Naive thymus-derived CD4-positive, alpha-beta T cell (primary cell): ENCODE measurements at regions of chr14 and their contacts with region 1.

Region 1: DNA sequence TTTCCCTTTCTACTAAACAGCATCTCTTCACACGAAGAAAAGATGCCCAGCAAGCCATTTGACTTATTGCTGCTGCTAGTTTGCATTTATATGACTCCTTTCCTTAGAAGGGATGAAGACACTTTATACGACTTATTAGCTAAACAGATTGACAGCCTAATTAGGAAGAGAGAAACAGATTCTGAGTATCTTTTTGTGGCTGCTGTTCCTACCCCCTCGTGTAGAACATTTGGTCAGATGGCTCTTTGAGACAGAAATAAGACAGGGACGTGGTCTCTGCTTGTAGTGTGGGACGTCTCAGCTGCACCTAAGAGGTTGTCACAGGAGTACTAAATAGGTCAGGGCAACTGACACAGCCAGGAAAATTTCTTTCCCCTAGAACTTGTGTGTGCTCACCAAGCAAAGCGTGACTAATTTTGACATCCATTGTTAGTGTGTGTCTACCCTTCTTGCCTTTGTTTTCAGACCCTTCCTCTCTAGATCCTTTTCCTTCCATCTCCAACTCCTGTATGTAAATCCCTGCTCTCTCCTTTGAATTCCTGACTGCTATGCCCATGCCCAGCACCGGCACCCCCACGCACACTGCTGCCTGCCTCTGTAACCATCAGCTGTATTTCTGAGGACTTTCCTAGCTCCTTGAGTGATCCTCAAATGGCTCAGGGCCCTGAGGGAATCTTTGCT is 83.2 kb downstream of the DAD1 start:
- DNase-seq: no peak
- ATAC-seq: peak; percentile 39
- H3K4me3 ChIP-seq: peak overlapping the region; percentile 51
- H3K4me3 Mint-ChIP-seq: peak overlapping the region; percentile 79 to 95 (median 87)
- H3K27ac ChIP-seq: peak overlapping the region; percentile 90
- H3K27ac Mint-ChIP-seq: peak overlapping the region; percentile 92 to 99 (median 96)
- H3K4me1 ChIP-seq: peaks cover 30 to 40% of the 10 kb centered on the region in 2 donors
- H3K4me1 Mint-ChIP-seq: peaks cover 19 to 82% (median 64%) of the 10 kb centered on the region in 7 donors
- H3K27me3 ChIP-seq: no peaks in the 10 kb centered on the region
- H3K27me3 Mint-ChIP-seq: no peaks in the 10 kb centered on the region

Region 2: DNA sequence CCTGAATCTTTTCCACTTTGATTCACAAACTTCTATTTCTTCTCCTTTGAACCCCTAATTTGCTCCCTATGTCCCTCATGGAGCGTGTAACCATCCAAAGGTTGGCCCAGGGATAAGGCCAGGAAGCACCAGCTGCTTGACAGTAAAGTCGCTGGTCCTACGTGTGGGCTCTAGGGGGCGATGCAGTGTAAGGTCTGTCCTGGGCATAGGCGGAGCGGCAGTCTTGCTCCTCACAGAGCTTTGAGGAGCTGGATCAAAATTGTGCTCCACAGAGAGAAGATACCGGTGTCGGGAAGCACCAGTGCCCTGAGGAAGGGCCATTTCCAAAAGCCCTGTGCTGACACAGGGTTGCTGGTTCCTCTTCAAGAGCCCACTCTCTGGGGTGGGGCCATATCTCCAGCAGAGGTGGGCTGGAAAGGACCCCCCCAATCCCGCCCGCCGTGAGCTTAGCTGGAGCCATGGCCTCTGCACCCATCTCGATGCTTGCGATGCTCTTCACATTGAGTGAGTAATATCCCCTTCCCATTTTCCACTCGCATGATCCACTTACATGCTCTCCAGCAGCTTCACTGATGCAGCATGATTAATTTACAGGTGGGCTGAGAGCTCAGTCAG is 782.3 kb before region 1 on chr14:
- CTCF ChIA-PET with region 1: no interaction called
- POLR2A ChIA-PET with region 1: no interaction called
- intact Hi-C with region 1: loop called in 1 of 2 experiments (anchors 2 kb)
- DNase-seq: peak in 5 of 9 donors; percentile 33 to 37 (median 36)
- ATAC-seq: peak; percentile 73
- H3K4me3 ChIP-seq: no peak overlapping the region
- H3K4me3 Mint-ChIP-seq: peak overlapping the region; percentile 33 to 94 (median 76)
- H3K27ac ChIP-seq: peak overlapping the region; percentile 33
- H3K27ac Mint-ChIP-seq: peak overlapping the region in 8 of 9 donors; percentile 15 to 80 (median 72)
- H3K4me1 ChIP-seq: no peaks in the 10 kb centered on the region
- H3K4me1 Mint-ChIP-seq: peaks cover 0 to 3% (median 0%) of the 10 kb centered on the region in 7 donors
- H3K27me3 ChIP-seq: no peaks in the 10 kb centered on the region
- H3K27me3 Mint-ChIP-seq: peaks cover 34 to 38% (median 36%) of the 10 kb centered on the region in 5 donors

Region 3: DNA sequence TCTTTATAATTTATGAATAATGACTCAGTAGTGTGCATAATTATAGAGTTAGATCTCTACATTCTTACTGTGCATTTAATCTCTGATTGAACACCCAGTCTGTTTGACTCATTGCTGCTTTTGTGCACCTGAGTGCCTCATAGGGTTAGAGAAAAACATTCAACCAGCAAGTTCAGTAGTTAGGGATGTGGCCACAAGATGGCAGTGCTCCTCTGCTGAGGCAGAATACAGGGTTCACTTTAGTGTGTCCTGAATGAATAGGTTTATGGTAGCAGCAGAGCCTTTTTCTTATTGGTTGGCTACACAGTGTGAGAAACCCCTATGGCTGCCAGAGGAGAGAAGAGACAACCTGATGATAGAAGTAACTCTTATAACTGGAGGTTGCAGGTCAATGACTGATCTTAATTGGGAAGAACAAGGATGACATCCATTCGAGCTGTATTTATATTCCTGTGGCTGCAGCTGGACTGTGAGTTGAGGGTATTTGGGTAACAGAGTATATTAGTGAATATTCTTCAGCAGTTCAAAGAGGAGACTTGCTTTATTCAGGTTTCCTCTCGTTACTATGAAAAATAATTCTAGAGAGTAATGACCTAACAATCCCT is 637.3 kb before region 1 on chr14:
- CTCF ChIA-PET with region 1: no interaction called
- POLR2A ChIA-PET with region 1: interaction called, 7 read pairs
- intact Hi-C with region 1: loop called in 1 of 2 experiments (anchors 5 kb)
- DNase-seq: peak; percentile 33 to 79 (median 70)
- ATAC-seq: peak; percentile 97
- H3K4me3 ChIP-seq: peak overlapping the region; percentile 16
- H3K4me3 Mint-ChIP-seq: peak overlapping the region; percentile 18 to 85 (median 74)
- H3K27ac ChIP-seq: peak overlapping the region; percentile 25
- H3K27ac Mint-ChIP-seq: peak overlapping the region; percentile 8 to 88 (median 59)
- H3K4me1 ChIP-seq: peaks cover 4 to 8% of the 10 kb centered on the region in 2 donors
- H3K4me1 Mint-ChIP-seq: peaks cover 3 to 54% (median 25%) of the 10 kb centered on the region in 7 donors
- H3K27me3 ChIP-seq: peaks cover 0 to 3% of the 10 kb centered on the region in 2 donors
- H3K27me3 Mint-ChIP-seq: peaks cover 0 to 6% (median 0%) of the 10 kb centered on the region in 5 donors

Region 4: DNA sequence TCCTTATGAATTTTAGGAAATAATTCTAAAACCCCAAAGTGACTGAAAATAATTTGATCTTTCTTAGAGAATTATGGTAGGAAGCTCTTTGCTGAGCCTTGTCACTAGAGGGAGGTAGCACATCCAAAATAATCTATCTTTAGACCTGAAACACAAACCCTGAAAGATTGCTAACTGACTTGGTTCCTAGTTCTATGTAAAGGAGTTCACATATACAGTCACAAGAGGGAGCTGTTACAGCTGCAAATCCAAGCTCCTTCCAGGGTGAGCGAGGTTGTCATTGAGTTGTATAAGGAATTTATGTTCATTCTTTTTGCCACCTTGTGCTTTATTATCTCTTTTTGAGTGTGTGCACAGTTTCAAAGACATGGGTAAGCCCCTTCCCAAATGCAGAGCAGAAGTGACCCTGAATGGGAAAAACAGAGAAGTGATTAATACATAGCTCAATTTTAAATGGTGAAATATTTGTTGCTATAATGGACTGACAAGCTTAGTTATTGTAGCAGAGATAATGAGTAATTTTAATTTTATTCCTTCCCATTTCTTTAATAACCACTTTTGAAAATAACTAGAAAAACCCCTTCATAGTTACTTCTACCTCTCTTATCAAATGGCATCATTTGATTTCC is 304.7 kb before region 1 on chr14:
- CTCF ChIA-PET with region 1: no interaction called
- POLR2A ChIA-PET with region 1: interaction called, 7 read pairs
- intact Hi-C with region 1: loop called in 1 of 2 experiments (anchors 5 kb)
- DNase-seq: peak in 6 of 9 donors; percentile 18 to 56 (median 37)
- ATAC-seq: peak; percentile 84
- H3K4me3 ChIP-seq: no peak overlapping the region
- H3K4me3 Mint-ChIP-seq: peak overlapping the region in 3 of 10 donors; percentile 25 to 63 (median 33)
- H3K27ac ChIP-seq: no peak overlapping the region
- H3K27ac Mint-ChIP-seq: peak overlapping the region in 2 of 9 donors; percentile 54 to 75
- H3K4me1 ChIP-seq: no peaks in the 10 kb centered on the region
- H3K4me1 Mint-ChIP-seq: peaks cover 0 to 17% (median 8%) of the 10 kb centered on the region in 7 donors
- H3K27me3 ChIP-seq: no peaks in the 10 kb centered on the region
- H3K27me3 Mint-ChIP-seq: no peaks in the 10 kb centered on the region

Region 5: DNA sequence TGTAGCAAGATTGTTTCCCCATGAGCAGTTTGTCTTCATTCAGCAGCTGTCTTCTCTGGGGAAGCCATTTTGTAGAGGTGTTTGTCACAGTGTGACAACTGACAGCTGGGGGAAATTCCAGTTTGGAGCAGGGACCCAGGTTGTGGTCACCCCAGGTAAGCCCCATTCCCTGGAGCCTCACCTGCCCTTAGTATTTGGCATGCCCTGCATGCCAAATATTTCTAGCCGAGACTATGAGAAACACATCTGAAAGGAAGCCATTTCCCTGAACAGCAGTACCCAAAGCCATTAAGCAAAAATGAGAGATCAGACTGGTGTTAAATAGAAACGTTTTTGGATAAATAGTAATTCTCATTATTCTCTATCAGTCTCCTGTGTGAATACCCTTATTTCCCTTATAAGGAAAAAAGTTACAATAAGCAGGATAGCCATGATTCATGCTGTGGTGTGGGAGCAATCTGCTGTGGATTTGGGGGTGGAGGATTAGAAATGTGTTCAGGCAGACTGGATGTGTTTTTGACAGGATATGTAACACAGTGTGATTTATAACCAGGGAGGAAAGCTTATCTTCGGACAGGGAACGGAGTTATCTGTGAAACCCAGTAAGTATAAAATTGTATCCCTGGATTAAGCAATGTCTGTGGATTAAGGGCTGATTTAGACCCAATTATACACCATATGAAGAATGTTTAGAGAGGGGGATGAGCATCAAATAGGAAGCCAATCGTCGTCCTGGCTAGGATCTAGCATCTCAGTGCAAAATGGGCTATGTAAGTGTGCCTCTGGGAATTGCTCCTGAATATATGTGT is 14.2 kb after region 1 on chr14:
- CTCF ChIA-PET with region 1: interaction called, 11 read pairs
- POLR2A ChIA-PET with region 1: interaction called, 558 read pairs
- intact Hi-C with region 1: loop called (anchors 1 kb)
- DNase-seq: peak in 1 of 9 donors; percentile 31
- ATAC-seq: peak; percentile 33
- H3K4me3 ChIP-seq: peak overlapping the region; percentile 56
- H3K4me3 Mint-ChIP-seq: peak overlapping the region; percentile 79 to 92 (median 89)
- H3K27ac ChIP-seq: peak overlapping the region; percentile 90
- H3K27ac Mint-ChIP-seq: peak overlapping the region; percentile 93 to 99 (median 96)
- H3K4me1 ChIP-seq: peaks cover 90 to 91% of the 10 kb centered on the region in 2 donors
- H3K4me1 Mint-ChIP-seq: peaks cover 28 to 99% (median 94%) of the 10 kb centered on the region in 7 donors
- H3K27me3 ChIP-seq: no peaks in the 10 kb centered on the region
- H3K27me3 Mint-ChIP-seq: no peaks in the 10 kb centered on the region

Region 6: DNA sequence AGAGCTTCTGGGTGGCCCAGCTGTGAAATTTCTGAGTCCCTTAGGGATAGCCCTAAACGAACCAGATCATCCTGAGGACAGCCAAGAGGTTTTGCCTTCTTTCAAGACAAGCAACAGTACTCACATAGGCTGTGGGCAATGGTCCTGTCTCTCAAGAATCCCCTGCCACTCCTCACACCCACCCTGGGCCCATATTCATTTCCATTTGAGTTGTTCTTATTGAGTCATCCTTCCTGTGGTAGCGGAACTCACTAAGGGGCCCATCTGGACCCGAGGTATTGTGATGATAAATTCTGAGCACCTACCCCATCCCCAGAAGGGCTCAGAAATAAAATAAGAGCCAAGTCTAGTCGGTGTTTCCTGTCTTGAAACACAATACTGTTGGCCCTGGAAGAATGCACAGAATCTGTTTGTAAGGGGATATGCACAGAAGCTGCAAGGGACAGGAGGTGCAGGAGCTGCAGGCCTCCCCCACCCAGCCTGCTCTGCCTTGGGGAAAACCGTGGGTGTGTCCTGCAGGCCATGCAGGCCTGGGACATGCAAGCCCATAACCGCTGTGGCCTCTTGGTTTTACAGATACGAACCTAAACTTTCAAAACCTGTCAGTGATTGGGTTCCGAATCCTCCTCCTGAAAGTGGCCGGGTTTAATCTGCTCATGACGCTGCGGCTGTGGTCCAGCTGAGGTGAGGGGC is 44.3 kb after region 1 on chr14:
- CTCF ChIA-PET with region 1: interaction called, 5 read pairs
- POLR2A ChIA-PET with region 1: interaction called, 709 read pairs
- intact Hi-C with region 1: loop called in 1 of 2 experiments (anchors 1 kb)
- DNase-seq: peak in 8 of 9 donors; percentile 54 to 86 (median 62)
- ATAC-seq: peak; percentile 57
- H3K4me3 ChIP-seq: peak overlapping the region; percentile 47
- H3K4me3 Mint-ChIP-seq: peak overlapping the region; percentile 79 to 92 (median 82)
- H3K27ac ChIP-seq: peak overlapping the region; percentile 96
- H3K27ac Mint-ChIP-seq: peak overlapping the region; percentile 93 to 99 (median 96)
- H3K4me1 ChIP-seq: peaks cover 97 to 98% of the 10 kb centered on the region in 2 donors
- H3K4me1 Mint-ChIP-seq: peaks cover 67 to 98% (median 96%) of the 10 kb centered on the region in 7 donors
- H3K27me3 ChIP-seq: no peaks in the 10 kb centered on the region
- H3K27me3 Mint-ChIP-seq: no peaks in the 10 kb centered on the region